ENCODE measurements at regions of chr9 and their contacts with region 1.

Region 1: DNA sequence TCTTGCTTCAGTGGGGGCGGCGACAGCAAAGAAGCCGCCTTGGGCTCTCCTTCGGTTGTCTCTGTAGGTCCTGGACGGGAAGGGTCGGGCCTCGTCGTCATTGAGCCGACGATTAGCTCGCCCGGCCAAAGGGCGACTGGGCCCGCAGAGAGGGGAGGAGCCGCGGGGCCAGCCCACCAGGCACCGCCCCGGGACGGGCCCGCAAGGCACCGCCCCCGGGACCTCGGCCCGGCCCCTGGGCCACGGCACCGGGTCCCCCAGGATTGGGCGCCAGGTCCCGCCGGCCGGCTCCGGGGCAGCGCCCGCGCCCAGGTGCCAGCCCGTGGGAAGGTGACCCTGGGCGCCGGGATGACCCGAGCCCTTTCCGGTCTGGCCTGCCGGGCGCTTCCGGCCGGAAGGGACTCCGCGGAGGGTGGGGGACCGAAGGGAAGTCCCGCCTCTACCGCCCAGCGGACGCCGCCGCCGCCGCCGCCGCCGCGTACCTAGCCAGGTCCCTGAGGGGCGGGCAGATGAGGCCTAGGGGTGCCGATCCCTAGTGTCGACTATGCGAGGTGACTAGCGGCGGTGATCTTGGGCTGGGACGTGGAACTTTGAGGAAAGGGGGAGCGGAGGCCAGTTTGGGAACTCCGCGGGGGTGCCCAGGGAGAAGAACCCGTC is at the starts of genes GBA2 and RGP1:
- DNase-seq: peak; percentile 87 to 94 (median 93)
- ATAC-seq: peak; percentile 89 to 92
- H3K4me3 ChIP-seq: peak within 1 kb of the TSS; percentile 98
- H3K27ac ChIP-seq: peak within 1 kb of the TSS; percentile 98
- H3K4me1 ChIP-seq: peaks cover 13% of the 10 kb centered on the region
- H3K27me3 ChIP-seq: no peaks in the 10 kb centered on the region
- total RNA-seq, gene GBA2: 93.7 to 117 (median 102) TPM
- total RNA-seq, gene RGP1: 25.7 to 35.0 (median 30.4) TPM

Region 2: GRCh38 chr9:35646533-35647265 is 102.3 kb before region 1 on chr9:
- intact Hi-C with region 1: no loop called
- DNase-seq: peak; percentile 93 to 98 (median 97)
- ATAC-seq: peak; percentile 96
- H3K4me3 ChIP-seq: peak overlapping the region; percentile 59
- H3K27ac ChIP-seq: peak overlapping the region; percentile 69
- H3K4me1 ChIP-seq: peaks cover 4% of the 10 kb centered on the region
- H3K27me3 ChIP-seq: no peaks in the 10 kb centered on the region

Region 3: DNA sequence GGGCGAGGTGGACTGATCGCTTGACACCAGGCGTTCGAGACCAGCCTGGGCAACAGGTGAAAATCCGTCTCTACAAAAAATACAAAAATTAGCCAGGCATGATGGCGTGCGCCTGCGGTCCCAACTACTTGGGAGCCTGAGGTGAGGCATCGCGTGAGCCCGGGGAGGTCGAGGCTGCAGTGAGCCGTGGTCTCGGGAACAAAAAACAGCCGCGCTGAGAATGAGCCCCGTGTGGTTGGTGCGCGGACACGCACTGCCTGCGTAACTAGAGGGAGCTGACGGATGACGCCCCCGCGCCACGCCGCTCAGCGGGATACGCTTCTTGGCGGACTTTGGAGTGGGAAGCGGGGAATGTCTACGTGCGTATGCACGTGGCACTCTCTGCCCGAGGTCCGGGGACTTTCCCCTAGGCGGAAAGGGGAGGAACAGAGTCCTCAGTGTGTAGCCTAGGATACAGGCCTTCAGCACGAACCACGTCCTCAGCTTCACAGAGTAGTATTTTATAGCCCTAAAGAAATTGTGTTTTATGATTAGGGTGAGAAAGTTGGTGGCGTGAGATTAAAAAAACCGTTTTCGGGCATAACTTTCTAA is 91.3 kb before region 1 on chr9 and contains the start of gene RMRP:
- intact Hi-C with region 1: loop called in 1 of 4 experiments (anchors 5 kb)
- DNase-seq: peak; percentile 98 to 99 (median 99)
- ATAC-seq: peak; percentile 97
- H3K4me3 ChIP-seq: peak within 1 kb of the TSS; percentile 85
- H3K27ac ChIP-seq: peak within 1 kb of the TSS; percentile 99
- H3K4me1 ChIP-seq: no peaks in the 10 kb centered on the region
- H3K27me3 ChIP-seq: no peaks in the 10 kb centered on the region
- total RNA-seq, gene RMRP: 19,654 to 22,919 (median 21,195) TPM

Measured in right cardiac atrium (tissue), 5 donors.